Left lung (tissue), 14 donors: ENCODE measurements at regions of chr12 and their contacts with region 1.

Region 1: DNA sequence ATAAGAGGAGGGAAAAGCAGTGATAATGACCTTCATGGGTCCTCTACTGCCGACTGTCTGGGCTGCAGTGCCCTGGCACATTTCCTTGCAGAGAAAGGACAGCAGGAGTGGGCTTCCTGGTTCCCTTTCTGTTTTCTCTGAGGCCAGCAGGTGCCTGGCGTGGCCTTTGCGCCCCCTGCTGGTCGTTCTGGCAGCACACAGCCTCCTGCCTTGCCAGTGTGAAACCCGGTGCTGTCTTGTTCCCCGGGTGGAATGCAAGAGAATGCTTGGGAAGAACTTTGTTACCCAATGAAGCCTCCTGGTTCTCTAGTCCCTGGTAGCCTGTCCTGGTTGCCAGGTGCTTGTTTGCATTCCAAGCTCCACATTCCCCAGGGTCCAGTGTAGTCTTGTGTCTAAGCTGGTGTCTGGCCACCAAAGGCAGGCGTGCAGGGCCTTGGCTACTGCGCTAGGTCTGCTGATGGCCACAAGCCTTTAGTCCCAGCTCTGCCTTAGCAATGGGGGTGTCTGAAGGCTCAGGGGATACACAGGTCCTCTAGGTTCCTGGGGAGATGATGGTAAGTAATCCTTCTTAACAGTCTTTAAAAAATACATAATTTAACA is 1392.4 kb upstream of the TMEM132C start:
- DNase-seq: peak; percentile 19 to 85 (median 48)
- ATAC-seq: peak; percentile 86
- H3K4me3 ChIP-seq: no peak overlapping the region
- H3K27ac ChIP-seq: no peak overlapping the region
- H3K4me1 ChIP-seq: no peaks in the 10 kb centered on the region
- H3K27me3 ChIP-seq: no peaks in the 10 kb centered on the region
- CTCF ChIP-seq: peak; percentile 83 to 88

Region 2: GRCh38 chr12:125183187-125184067 is 1691.1 kb before region 1 on chr12:
- intact Hi-C with region 1: loop called in 1 of 2 experiments (anchors 5 kb)
- DNase-seq: peak; percentile 65 to 92 (median 79)
- ATAC-seq: peak; percentile 89
- H3K4me3 ChIP-seq: no peak overlapping the region
- H3K27ac ChIP-seq: no peak overlapping the region
- H3K4me1 ChIP-seq: peaks cover 8 to 15% of the 10 kb centered on the region in 2 donors
- H3K27me3 ChIP-seq: peaks cover 45 to 94% of the 10 kb centered on the region in 2 donors
- CTCF ChIP-seq: peak; percentile 98 to 99